ENCODE measurements at regions of chr10 and their contacts with region 1.

Region 1: GRCh38 chr10:28250782-28251181 is 52.1 kb downstream of the MPP7 start:
- DNase-seq: no peak

Region 2: GRCh38 chr10:28120043-28120749 is 130.6 kb before region 1 on chr10:
- CTCF ChIA-PET with region 1: no interaction called
- POLR2A ChIA-PET with region 1: no interaction called
- DNase-seq: no peak

Region 3: GRCh38 chr10:28381903-28382347 is 131.1 kb after region 1 on chr10:
- CTCF ChIA-PET with region 1: interaction called, 17 read pairs
- POLR2A ChIA-PET with region 1: no interaction called
- DNase-seq: peak; percentile 59

Region 4: GRCh38 chr10:28387141-28387540 is 136.4 kb after region 1 on chr10:
- CTCF ChIA-PET with region 1: interaction called, 17 read pairs
- POLR2A ChIA-PET with region 1: no interaction called
- DNase-seq: no peak

Region 5: DNA sequence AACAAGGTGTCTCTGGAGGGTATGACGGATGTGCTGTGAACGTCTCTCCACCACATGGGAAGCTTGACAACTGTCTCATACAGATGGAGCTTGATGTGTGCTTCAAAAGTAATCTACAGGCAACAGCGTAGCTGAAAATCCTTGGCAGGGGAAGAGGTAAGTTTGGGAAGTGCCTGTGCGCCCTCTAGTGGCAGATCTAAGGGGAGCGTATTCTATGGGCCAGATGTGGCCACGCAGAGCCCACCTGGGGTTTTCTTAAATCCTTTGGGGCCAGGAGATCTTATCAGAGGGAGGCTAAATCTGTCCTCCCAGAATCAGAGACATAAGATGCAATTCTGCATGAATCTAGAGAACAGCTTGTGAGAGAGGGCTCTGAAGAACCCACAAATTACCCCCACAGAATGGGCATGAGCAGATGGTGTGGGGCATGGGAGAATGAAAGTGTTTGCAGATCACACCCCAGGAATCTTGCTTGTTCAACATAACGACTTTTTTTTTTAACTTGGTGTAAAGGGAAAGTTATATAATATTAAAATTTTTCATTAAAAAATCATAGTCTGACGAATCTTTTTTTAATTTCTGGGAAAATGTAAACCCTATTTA is 143.3 kb after region 1 on chr10:
- CTCF ChIA-PET with region 1: interaction called, 11 read pairs
- POLR2A ChIA-PET with region 1: no interaction called
- DNase-seq: peak; percentile 63

Measured in HEK293T (cell line).